CD4-positive, alpha-beta T cell (primary cell): ENCODE measurements at regions of chr12 and their contacts with region 1.

Region 1: GRCh38 chr12:28190321-28191050 is at the start of gene CCDC91:
- DNase-seq: peak; percentile 82 to 97 (median 88)
- ATAC-seq: peak; percentile 79
- H3K4me3 ChIP-seq: peak within 1 kb of the TSS; percentile 76
- H3K4me3 Mint-ChIP-seq: peak within 1 kb of the TSS; percentile 97
- H3K27ac ChIP-seq: peak within 1 kb of the TSS; percentile 98 to 99
- H3K27ac Mint-ChIP-seq: peak within 1 kb of the TSS; percentile 99
- H3K4me1 ChIP-seq: peaks cover 21% of the 10 kb centered on the region
- H3K4me1 Mint-ChIP-seq: peaks cover 65% of the 10 kb centered on the region
- H3K27me3 ChIP-seq: no peaks in the 10 kb centered on the region
- H3K27me3 Mint-ChIP-seq: no peaks in the 10 kb centered on the region
- CTCF ChIP-seq: no peak
- total RNA-seq, gene CCDC91: 52.9 to 55.3 TPM

Region 2: GRCh38 chr12:27014085-27014858 is 1176.2 kb before region 1 on chr12 and contains the start of gene TM7SF3:
- CTCF ChIA-PET with region 1: no interaction called
- POLR2A ChIA-PET with region 1: interaction called, 4 read pairs
- intact Hi-C with region 1: loop called in 1 of 2 experiments (anchors 2 kb)
- DNase-seq: peak; percentile 91 to 99 (median 96)
- ATAC-seq: peak; percentile 82
- H3K4me3 ChIP-seq: peak within 1 kb of the TSS; percentile 89
- H3K4me3 Mint-ChIP-seq: peak within 1 kb of the TSS; percentile 93
- H3K27ac ChIP-seq: peak within 1 kb of the TSS; percentile 92 to 96
- H3K27ac Mint-ChIP-seq: peak within 1 kb of the TSS; percentile 97
- H3K4me1 ChIP-seq: peaks cover 25% of the 10 kb centered on the region
- H3K4me1 Mint-ChIP-seq: peaks cover 57% of the 10 kb centered on the region
- H3K27me3 ChIP-seq: no peaks in the 10 kb centered on the region
- H3K27me3 Mint-ChIP-seq: no peaks in the 10 kb centered on the region
- CTCF ChIP-seq: peak; percentile 99
- total RNA-seq, gene TM7SF3: 8.3 to 9.5 TPM

Region 3: GRCh38 chr12:27710592-27711316 is 479.7 kb before region 1 on chr12 and contains the start of gene MRPS35:
- CTCF ChIA-PET with region 1: no interaction called
- POLR2A ChIA-PET with region 1: interaction called, 3 read pairs
- intact Hi-C with region 1: loop called in 1 of 2 experiments (anchors 5 kb)
- DNase-seq: peak; percentile 83 to 95 (median 88)
- ATAC-seq: peak; percentile 96
- H3K4me3 ChIP-seq: peak within 1 kb of the TSS; percentile 71
- H3K4me3 Mint-ChIP-seq: peak within 1 kb of the TSS; percentile 98
- H3K27ac ChIP-seq: peak within 1 kb of the TSS; percentile 60 to 69
- H3K27ac Mint-ChIP-seq: peak within 1 kb of the TSS; percentile 96
- H3K4me1 ChIP-seq: peaks cover 25% of the 10 kb centered on the region
- H3K4me1 Mint-ChIP-seq: peaks cover 41% of the 10 kb centered on the region
- H3K27me3 ChIP-seq: no peaks in the 10 kb centered on the region
- H3K27me3 Mint-ChIP-seq: no peaks in the 10 kb centered on the region
- CTCF ChIP-seq: no peak
- total RNA-seq, gene MRPS35: 22.1 to 23.9 TPM

Region 4: GRCh38 chr12:28135801-28136439 is 54.6 kb before region 1 on chr12:
- CTCF ChIA-PET with region 1: no interaction called
- POLR2A ChIA-PET with region 1: no interaction called
- intact Hi-C with region 1: no loop called
- DNase-seq: no peak
- ATAC-seq: no peak
- H3K4me3 ChIP-seq: no peak overlapping the region
- H3K4me3 Mint-ChIP-seq: no peak overlapping the region
- H3K27ac ChIP-seq: no peak overlapping the region
- H3K27ac Mint-ChIP-seq: no peak overlapping the region
- H3K4me1 ChIP-seq: no peaks in the 10 kb centered on the region
- H3K4me1 Mint-ChIP-seq: no peaks in the 10 kb centered on the region
- H3K27me3 ChIP-seq: no peaks in the 10 kb centered on the region
- H3K27me3 Mint-ChIP-seq: peaks cover 4% of the 10 kb centered on the region
- CTCF ChIP-seq: no peak

Region 5: DNA sequence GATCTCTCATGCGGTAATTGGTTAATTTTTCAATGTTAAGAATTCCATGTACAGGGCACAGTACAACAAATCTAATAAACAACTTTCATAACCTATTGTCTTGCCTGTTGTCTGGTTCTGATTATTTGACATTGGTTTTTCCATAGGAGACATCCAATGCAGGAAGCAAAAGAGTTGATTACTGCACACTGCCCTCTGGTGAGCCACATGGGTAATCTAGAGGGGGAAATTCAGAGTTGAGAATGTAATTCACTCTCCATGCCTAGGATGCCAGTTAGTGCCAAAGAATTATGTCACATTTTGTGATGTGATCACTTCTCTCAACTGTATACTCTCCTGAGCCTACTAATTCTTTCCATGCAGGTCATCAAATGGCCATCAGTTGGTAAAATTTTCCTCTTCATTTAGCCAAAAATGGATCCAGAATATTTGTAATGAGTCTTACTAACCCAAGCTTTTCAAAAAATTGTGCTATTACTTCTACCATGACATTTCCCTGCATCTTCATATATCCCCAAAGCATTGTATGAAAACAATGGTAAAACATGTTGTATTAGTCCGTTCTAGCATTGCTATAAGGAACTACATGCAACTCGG is 18.0 kb before region 1 on chr12:
- CTCF ChIA-PET with region 1: no interaction called
- POLR2A ChIA-PET with region 1: interaction called, 6 read pairs
- intact Hi-C with region 1: loop called in 1 of 2 experiments (anchors 2 kb)
- DNase-seq: peak in 3 of 14 experiments; percentile 4 to 21 (median 16)
- ATAC-seq: no peak
- H3K4me3 ChIP-seq: no peak overlapping the region
- H3K4me3 Mint-ChIP-seq: no peak overlapping the region
- H3K27ac ChIP-seq: no peak overlapping the region
- H3K27ac Mint-ChIP-seq: no peak overlapping the region
- H3K4me1 ChIP-seq: no peaks in the 10 kb centered on the region
- H3K4me1 Mint-ChIP-seq: no peaks in the 10 kb centered on the region
- H3K27me3 ChIP-seq: no peaks in the 10 kb centered on the region
- H3K27me3 Mint-ChIP-seq: no peaks in the 10 kb centered on the region
- CTCF ChIP-seq: peak; percentile 20

Region 6: DNA sequence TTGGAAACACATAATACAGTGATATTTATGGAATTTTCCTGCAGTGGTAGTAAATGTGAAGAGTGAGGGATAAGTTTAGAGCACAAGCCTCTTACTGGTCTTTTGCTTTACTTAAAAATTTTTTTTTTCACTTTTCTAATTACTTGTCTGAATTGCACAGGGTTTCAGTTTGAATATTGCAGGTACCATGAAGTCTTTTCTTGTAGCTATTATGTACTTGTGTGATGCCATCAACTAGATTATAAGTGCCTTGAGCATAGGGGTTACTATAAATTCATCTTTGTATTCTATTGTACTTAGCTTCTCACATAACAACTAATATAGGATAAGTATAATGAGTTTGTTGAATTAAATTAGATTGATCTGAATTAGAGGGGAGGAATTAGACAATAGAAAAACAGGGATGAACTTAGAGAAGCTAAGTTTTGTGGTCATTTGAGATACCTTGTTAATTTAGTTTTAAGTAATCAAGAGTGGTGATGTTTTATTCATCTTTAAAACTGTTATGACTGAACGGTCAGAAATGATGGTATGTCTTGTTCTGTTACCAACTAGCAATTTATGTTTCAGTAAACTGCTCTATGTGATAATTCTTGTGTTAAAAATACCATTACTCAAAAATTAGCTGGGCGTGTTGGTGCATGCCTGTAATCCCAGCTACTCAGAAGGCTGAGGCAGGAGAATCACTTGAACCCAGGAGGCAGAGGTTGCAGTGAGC is 41.9 kb after region 1 on chr12:
- CTCF ChIA-PET with region 1: no interaction called
- POLR2A ChIA-PET with region 1: interaction called, 4 read pairs
- intact Hi-C with region 1: loop called in 1 of 2 experiments (anchors 5 kb)
- DNase-seq: no peak
- ATAC-seq: no peak
- H3K4me3 ChIP-seq: no peak overlapping the region
- H3K4me3 Mint-ChIP-seq: no peak overlapping the region
- H3K27ac ChIP-seq: no peak overlapping the region
- H3K27ac Mint-ChIP-seq: no peak overlapping the region
- H3K4me1 ChIP-seq: no peaks in the 10 kb centered on the region
- H3K4me1 Mint-ChIP-seq: peaks cover 57% of the 10 kb centered on the region
- H3K27me3 ChIP-seq: no peaks in the 10 kb centered on the region
- H3K27me3 Mint-ChIP-seq: no peaks in the 10 kb centered on the region
- CTCF ChIP-seq: no peak

Region 7: DNA sequence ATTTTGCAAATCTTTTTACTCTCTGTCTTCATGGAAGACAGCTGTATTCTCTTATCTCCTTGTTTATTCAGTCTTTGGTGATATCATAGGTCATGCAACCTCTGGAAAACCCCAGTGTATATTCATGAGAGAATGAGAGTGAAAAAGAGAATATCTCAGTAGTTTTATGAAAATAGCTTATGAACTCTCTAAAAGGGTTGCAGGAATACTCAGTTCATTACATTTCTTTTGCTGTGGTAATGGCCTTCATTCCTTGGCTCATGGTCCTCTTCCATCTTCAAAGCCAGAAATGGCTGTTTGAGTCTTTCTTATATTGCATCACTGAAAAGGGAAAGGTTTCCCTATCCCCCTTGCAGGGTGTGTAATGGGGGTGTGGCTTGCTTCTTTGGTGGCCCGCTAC is 149.8 kb after region 1 on chr12:
- CTCF ChIA-PET with region 1: no interaction called
- POLR2A ChIA-PET with region 1: no interaction called
- intact Hi-C with region 1: no loop called
- DNase-seq: no peak
- ATAC-seq: no peak
- H3K4me3 ChIP-seq: no peak overlapping the region
- H3K4me3 Mint-ChIP-seq: no peak overlapping the region
- H3K27ac ChIP-seq: no peak overlapping the region
- H3K27ac Mint-ChIP-seq: no peak overlapping the region
- H3K4me1 ChIP-seq: no peaks in the 10 kb centered on the region
- H3K4me1 Mint-ChIP-seq: no peaks in the 10 kb centered on the region
- H3K27me3 ChIP-seq: no peaks in the 10 kb centered on the region
- H3K27me3 Mint-ChIP-seq: no peaks in the 10 kb centered on the region
- CTCF ChIP-seq: no peak

Region 8: GRCh38 chr12:28645891-28646290 is 455.4 kb after region 1 on chr12:
- CTCF ChIA-PET with region 1: no interaction called
- POLR2A ChIA-PET with region 1: no interaction called
- intact Hi-C with region 1: no loop called
- DNase-seq: no peak
- ATAC-seq: no peak
- H3K4me3 ChIP-seq: no peak overlapping the region
- H3K4me3 Mint-ChIP-seq: no peak overlapping the region
- H3K27ac ChIP-seq: no peak overlapping the region
- H3K27ac Mint-ChIP-seq: no peak overlapping the region
- H3K4me1 ChIP-seq: no peaks in the 10 kb centered on the region
- H3K4me1 Mint-ChIP-seq: no peaks in the 10 kb centered on the region
- H3K27me3 ChIP-seq: no peaks in the 10 kb centered on the region
- H3K27me3 Mint-ChIP-seq: no peaks in the 10 kb centered on the region
- CTCF ChIP-seq: no peak

Region 9: GRCh38 chr12:29374913-29375312 is 1184.4 kb after region 1 on chr12:
- CTCF ChIA-PET with region 1: no interaction called
- POLR2A ChIA-PET with region 1: no interaction called
- intact Hi-C with region 1: loop called in 1 of 2 experiments (anchors 10 kb)
- DNase-seq: no peak
- ATAC-seq: no peak
- H3K4me3 ChIP-seq: no peak overlapping the region
- H3K4me3 Mint-ChIP-seq: no peak overlapping the region
- H3K27ac ChIP-seq: no peak overlapping the region
- H3K27ac Mint-ChIP-seq: no peak overlapping the region
- H3K4me1 ChIP-seq: no peaks in the 10 kb centered on the region
- H3K4me1 Mint-ChIP-seq: peaks cover 20% of the 10 kb centered on the region
- H3K27me3 ChIP-seq: no peaks in the 10 kb centered on the region
- H3K27me3 Mint-ChIP-seq: no peaks in the 10 kb centered on the region
- CTCF ChIP-seq: no peak